ENCODE measurements at regions of chr13 and their contacts with region 1.

Region 1: DNA sequence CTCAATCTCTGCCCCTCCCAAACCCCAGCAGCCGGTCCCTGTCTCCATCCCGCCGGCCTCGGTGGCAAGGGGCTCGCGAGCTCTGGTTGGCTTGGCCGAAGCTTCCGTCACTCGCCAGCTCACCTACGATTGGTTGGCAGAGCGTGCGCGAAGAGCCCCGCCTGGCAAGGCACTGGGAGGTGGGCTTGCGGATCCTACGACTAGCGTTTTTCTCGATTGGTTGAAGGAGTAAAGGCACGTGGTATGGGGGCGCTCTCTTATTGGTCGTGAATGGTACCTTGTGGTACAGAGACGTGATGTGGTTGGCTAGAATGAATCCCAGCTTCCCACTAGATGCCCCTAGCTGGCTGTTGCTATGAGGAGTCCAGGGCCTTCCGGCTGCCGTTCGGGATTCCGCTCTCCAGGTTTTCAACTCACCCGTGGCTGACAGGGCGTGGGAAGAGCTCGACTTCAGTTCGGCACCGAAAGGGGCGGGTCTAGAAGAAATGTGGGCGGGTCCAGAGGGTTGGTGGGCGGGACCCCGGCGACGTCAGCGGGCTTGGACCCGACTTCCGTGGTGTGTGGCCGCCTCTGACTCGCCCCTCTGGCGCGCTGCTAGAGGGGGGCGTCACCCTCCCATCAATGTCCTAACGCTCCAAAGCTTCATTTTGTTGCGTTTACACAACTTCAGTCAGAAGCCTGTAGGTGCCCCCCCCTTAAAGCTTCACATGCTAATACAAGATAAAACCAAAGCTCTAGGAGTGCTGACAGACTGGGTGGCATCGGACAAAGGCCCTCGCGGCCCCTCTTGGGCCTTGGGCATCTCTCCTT is 847 bp upstream of the RAP2A start:
- DNase-seq: peak; percentile 98 to 99
- ATAC-seq: peak; percentile 83

Region 2: DNA sequence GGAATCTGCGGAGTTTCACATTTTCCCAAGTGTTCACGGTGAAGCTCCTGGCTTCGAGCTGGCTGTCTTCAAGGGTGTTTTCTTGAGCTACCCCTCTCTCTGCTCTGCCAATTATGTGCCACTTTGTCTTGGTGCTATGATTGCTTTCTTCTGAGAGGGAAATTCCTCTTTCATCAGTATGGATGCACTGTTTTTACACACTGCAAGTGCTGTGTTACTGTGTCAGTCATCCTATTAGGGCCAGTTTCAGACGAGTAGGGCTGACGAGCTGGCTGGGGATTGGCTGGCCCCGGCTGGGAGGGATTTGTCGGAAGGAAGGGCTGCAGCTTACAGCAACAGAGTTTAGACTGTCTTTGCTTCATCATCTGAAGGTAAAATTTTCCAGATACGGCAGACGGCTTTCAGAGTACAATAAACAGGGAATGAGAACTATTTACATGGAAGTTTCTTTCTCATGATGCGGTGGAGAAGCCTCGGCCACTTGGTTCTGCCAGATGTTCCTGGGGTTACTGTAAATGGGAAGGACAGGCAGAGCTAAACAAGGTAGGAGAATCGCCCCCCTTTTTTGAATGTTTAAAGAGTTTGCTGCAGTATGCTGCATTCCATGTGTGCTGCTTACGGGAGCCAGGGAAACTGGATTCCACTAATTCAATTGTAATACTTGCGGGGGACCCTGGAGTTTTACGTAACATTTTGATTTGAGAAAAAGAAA is 211.0 kb before region 1 on chr13 and contains the start of gene MBNL2:
- intact Hi-C with region 1: loop called in 1 of 2 experiments (anchors 10 kb)
- DNase-seq: peak; percentile 87 to 95
- ATAC-seq: peak; percentile 90
- total RNA-seq, gene MBNL2: 31.4 to 50.1 TPM

Region 3: GRCh38 chr13:97648171-97648880 is 215.2 kb after region 1 on chr13:
- intact Hi-C with region 1: no loop called
- DNase-seq: no peak
- ATAC-seq: no peak